ENCODE measurements at regions of chr7 and their contacts with region 1.

Region 1: GRCh38 chr7:1137510-1138167 is 22.4 kb downstream of the ZFAND2A start:
- DNase-seq: peak; percentile 27
- ATAC-seq: peak; percentile 66
- H3K4me3 Mint-ChIP-seq: peak overlapping the region; percentile 79
- H3K27ac Mint-ChIP-seq: peak overlapping the region; percentile 71
- H3K4me1 Mint-ChIP-seq: peaks cover 16% of the 10 kb centered on the region
- H3K27me3 Mint-ChIP-seq: no peaks in the 10 kb centered on the region
- CTCF ChIP-seq: peak; percentile 18

Region 2: DNA sequence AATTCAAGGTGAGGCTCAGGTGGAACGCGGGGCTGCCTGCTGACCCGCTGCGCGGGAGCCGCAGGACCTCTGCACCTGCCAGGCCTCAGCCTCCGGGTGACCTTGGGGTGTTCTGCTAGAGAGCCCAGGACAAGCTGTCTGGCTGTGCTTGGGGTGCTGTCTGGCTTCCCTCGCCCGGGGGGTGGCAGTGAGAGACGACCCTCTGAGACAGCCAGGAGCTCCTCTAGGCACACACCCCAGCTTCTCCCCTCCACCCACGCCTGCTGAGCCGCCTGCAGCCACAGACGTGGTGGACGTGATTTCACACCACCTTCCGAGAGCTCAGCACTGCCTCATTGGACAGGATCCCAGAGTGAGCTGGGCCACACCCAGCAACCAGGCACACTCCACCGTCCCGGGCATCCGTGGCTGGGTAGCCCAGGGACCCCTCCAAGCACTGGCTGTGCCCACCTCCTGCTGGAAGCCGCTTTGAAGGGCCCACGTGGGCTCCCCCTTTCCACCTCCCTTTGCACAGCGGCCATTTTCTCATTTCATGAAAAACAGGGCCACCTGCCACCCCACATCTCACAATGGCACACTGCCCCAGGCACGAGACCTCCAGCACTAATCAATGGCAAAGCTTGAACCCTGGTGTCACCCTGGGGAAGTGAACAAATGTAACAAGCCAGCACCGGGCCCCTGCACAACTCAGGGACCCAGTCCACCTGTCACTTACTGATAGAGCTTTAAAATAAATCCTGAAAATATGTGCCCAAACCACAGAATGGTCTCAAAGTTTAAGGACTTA is 12.6 kb before region 1 on chr7:
- CTCF ChIA-PET with region 1: no interaction called
- POLR2A ChIA-PET with region 1: interaction called, 10 read pairs
- intact Hi-C with region 1: no loop called
- DNase-seq: no peak
- ATAC-seq: no peak
- H3K4me3 Mint-ChIP-seq: no peak overlapping the region
- H3K27ac Mint-ChIP-seq: no peak overlapping the region
- H3K4me1 Mint-ChIP-seq: no peaks in the 10 kb centered on the region
- H3K27me3 Mint-ChIP-seq: no peaks in the 10 kb centered on the region
- CTCF ChIP-seq: no peak

Region 3: GRCh38 chr7:1159891-1160668 is 22.4 kb after region 1 on chr7 and contains the start of gene ZFAND2A:
- CTCF ChIA-PET with region 1: interaction called, 7 read pairs
- POLR2A ChIA-PET with region 1: interaction called, 12 read pairs
- intact Hi-C with region 1: no loop called
- DNase-seq: peak; percentile 99
- ATAC-seq: peak; percentile 98
- H3K4me3 Mint-ChIP-seq: peak within 1 kb of the TSS; percentile 87
- H3K27ac Mint-ChIP-seq: peak within 1 kb of the TSS; percentile 89
- H3K4me1 Mint-ChIP-seq: peaks cover 24% of the 10 kb centered on the region
- H3K27me3 Mint-ChIP-seq: no peaks in the 10 kb centered on the region
- CTCF ChIP-seq: no peak
- total RNA-seq, gene ZFAND2A: 22.1 to 23.5 TPM

Measured in activated CD8-positive, alpha-beta T cell treated with anti-CD3 and anti-CD28 coated beads for 36 hours (primary cell).